ENCODE measurements at regions of chr11 and their contacts with region 1.

Region 1: DNA sequence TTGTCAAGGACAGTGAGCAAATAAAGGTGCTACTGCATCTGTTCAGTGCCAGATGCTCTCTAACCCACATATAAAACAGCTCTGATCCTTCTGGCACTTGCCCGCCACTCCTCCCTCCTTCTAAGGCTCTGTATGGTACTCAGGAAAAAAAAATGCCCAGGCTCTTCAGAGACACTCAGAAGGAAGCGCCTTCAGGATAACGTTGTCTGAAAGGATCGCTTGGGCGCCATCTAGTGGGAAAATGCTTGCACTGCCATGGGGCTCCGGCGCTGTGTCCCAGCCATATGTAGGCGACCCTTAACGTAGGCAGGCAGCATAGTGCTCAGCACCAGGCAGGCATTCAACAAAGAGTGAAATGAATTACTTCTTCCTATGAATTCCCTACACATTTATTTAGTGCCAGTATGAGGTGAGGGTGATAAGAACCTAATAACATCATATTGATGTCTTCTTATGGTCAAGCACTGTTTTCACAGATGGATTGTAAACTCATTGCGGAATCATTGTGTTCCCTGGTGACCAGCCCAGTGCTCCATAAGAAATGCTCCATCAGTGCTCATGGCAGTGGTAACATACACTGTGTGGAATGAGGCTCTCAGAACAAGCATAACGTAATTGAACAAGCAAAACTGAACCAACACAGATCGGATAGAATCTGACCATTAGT is 39.6 kb downstream of the PAMR1 start:
- DNase-seq: peak; percentile 37 to 58 (median 53)
- H3K4me3 ChIP-seq: no peak overlapping the region
- H3K4me3 Mint-ChIP-seq: no peak overlapping the region
- H3K27ac ChIP-seq: no peak overlapping the region
- H3K27ac Mint-ChIP-seq: peak overlapping the region in 1 of 7 donors; percentile 33
- H3K4me1 ChIP-seq: no peaks in the 10 kb centered on the region
- H3K4me1 Mint-ChIP-seq: no peaks in the 10 kb centered on the region
- H3K27me3 ChIP-seq: peaks cover 15% of the 10 kb centered on the region
- H3K27me3 Mint-ChIP-seq: peaks cover 36 to 43% of the 10 kb centered on the region in 2 donors

Region 2: DNA sequence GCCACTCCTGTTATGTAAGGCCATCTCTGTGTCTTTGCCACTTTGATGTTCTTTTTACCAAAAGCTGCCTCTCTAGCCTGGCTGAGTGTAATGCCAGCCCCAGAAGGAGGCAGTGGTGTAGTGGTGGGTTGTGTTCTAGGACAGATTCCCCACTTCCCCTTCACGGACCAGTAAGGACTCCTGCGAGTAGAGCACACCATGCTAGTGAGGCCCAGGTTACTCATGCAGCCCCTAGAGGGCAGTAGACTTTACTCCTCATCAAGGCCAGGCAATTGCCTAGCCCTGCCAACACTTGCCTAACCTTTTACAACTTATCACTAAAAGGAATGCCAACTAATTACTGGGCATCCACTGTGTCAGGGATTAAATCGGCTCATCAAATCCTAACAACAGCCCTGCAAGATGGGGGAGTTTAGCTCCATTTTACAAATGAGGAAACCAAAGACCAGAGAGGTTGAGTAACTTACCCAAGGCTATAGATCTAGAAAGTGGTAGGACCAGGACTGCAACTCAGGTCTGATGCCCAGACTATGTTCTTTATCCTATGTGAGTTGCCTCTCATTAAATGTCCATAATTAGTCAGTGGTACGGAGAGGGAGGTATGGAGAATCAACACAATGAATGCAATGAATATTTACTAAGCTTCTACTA is 644.9 kb before region 1 on chr11:
- CTCF ChIA-PET with region 1: interaction called, 4 read pairs
- POLR2A ChIA-PET with region 1: no interaction called
- intact Hi-C with region 1: loop called (anchors 5 kb)
- DNase-seq: peak in 2 of 5 donors; percentile 14 to 15
- H3K4me3 ChIP-seq: no peak overlapping the region
- H3K4me3 Mint-ChIP-seq: no peak overlapping the region
- H3K27ac ChIP-seq: no peak overlapping the region
- H3K27ac Mint-ChIP-seq: no peak overlapping the region
- H3K4me1 ChIP-seq: no peaks in the 10 kb centered on the region
- H3K4me1 Mint-ChIP-seq: no peaks in the 10 kb centered on the region
- H3K27me3 ChIP-seq: no peaks in the 10 kb centered on the region
- H3K27me3 Mint-ChIP-seq: peaks cover 11 to 25% of the 10 kb centered on the region in 2 donors

Region 3: DNA sequence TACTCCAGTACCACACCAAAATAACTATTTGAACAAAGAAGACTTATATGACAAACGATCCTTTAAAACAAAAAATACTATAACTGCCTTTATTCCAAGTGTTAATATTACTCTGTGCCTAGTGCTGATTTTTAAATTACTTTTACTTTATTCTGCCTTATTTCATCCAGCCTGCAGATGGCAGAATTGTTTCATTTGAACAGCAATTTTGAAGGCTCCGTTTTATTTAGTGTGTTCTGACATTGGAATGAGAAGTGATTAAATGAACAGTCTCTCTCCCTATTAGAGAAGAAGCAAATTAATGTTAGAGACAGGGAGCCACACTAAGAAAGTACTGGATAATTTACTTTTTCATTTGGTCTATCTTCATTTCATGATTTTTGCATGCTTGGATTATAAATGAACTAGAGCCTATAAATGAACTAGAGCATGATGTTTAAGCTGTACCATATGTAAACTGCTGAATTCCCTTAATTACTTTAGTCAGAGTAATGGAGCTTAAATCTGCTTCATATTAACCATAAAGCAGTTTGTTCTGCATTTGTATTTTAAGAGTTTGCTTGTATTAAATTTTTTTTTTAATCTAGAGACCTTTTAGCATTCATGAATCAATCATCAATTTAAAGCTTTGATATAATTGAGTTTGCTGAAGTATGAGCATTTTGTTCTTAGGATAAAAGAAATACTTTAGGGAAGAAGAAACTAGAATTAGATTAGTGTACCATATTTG is 559.5 kb before region 1 on chr11:
- CTCF ChIA-PET with region 1: interaction called, 13 read pairs
- POLR2A ChIA-PET with region 1: interaction called, 3 read pairs
- intact Hi-C with region 1: loop called (anchors 1 kb)
- DNase-seq: peak in 4 of 5 donors; percentile 49 to 57 (median 54)
- H3K4me3 ChIP-seq: no peak overlapping the region
- H3K4me3 Mint-ChIP-seq: no peak overlapping the region
- H3K27ac ChIP-seq: no peak overlapping the region
- H3K27ac Mint-ChIP-seq: peak overlapping the region in 1 of 7 donors; percentile 78
- H3K4me1 ChIP-seq: no peaks in the 10 kb centered on the region
- H3K4me1 Mint-ChIP-seq: peaks cover 8 to 25% (median 15%) of the 10 kb centered on the region in 4 donors
- H3K27me3 ChIP-seq: no peaks in the 10 kb centered on the region
- H3K27me3 Mint-ChIP-seq: no peaks in the 10 kb centered on the region

Region 4: GRCh38 chr11:35496416-35496815 is 10.6 kb after region 1 on chr11:
- CTCF ChIA-PET with region 1: interaction called, 20 read pairs
- POLR2A ChIA-PET with region 1: no interaction called
- intact Hi-C with region 1: no loop called
- DNase-seq: no peak
- H3K4me3 ChIP-seq: no peak overlapping the region
- H3K4me3 Mint-ChIP-seq: no peak overlapping the region
- H3K27ac ChIP-seq: no peak overlapping the region
- H3K27ac Mint-ChIP-seq: no peak overlapping the region
- H3K4me1 ChIP-seq: no peaks in the 10 kb centered on the region
- H3K4me1 Mint-ChIP-seq: no peaks in the 10 kb centered on the region
- H3K27me3 ChIP-seq: no peaks in the 10 kb centered on the region
- H3K27me3 Mint-ChIP-seq: peaks cover 10 to 11% of the 10 kb centered on the region in 2 donors

Region 5: GRCh38 chr11:36265793-36266628 is 780.2 kb after region 1 on chr11:
- CTCF ChIA-PET with region 1: interaction called, 6 read pairs
- POLR2A ChIA-PET with region 1: no interaction called
- intact Hi-C with region 1: loop called (anchors 5 kb)
- DNase-seq: peak in 4 of 5 donors; percentile 30 to 46 (median 36)
- H3K4me3 ChIP-seq: no peak overlapping the region
- H3K4me3 Mint-ChIP-seq: no peak overlapping the region
- H3K27ac ChIP-seq: no peak overlapping the region
- H3K27ac Mint-ChIP-seq: no peak overlapping the region
- H3K4me1 ChIP-seq: no peaks in the 10 kb centered on the region
- H3K4me1 Mint-ChIP-seq: peaks cover 0 to 3% (median 0%) of the 10 kb centered on the region in 4 donors
- H3K27me3 ChIP-seq: no peaks in the 10 kb centered on the region
- H3K27me3 Mint-ChIP-seq: peaks cover 7 to 11% of the 10 kb centered on the region in 2 donors

Measured in CD4-positive, alpha-beta memory T cell (primary cell).